T-cell (primary cell): ENCODE measurements at regions of chr5 and their contacts with region 1.

Region 1: DNA sequence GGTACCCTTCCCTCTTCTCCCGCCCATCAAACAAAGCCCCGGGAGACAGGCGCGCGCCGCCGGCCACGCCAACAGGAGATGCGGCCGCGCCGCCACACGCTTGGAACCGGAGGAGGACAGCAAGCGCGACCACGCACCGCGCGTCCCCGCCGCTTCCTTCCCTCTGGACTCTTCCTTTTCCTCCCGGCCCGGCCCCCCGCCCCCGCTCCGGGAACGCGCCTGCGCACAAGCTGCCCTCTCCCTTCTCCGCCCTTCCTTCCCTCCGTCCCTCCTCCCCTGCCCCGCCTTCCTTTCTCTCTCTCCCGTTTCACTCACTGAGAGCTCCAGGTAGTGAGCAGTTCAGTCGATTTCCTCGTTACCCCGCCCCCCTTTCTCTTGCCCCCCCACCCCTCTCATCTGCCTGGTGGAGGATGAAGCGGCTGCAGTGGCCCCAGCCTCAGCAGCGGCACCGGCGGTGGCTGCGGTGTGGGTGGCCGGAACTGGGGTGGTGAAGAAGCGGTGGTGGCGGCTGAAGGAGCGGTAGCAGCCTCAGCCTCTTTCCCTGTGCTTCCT is at the start of gene RASA1:
- DNase-seq: peak in 23 of 35 experiments; percentile 32 to 82 (median 59)
- ATAC-seq: peak; percentile 61 to 71 (median 68)
- H3K4me3 ChIP-seq: peak within 1 kb of the TSS; percentile 96 to 97
- H3K4me3 Mint-ChIP-seq: peak within 1 kb of the TSS; percentile 98 to 99 (median 99)
- H3K27ac ChIP-seq: peak within 1 kb of the TSS; percentile 74
- H3K27ac Mint-ChIP-seq: peak within 1 kb of the TSS; percentile 96
- H3K4me1 ChIP-seq: peaks cover 8 to 26% of the 10 kb centered on the region in 2 experiments
- H3K4me1 Mint-ChIP-seq: peaks cover 24 to 43% (median 34%) of the 10 kb centered on the region in 3 donors
- H3K27me3 ChIP-seq: no peaks in the 10 kb centered on the region
- H3K27me3 Mint-ChIP-seq: peaks cover 0 to 2% of the 10 kb centered on the region in 2 donors
- total RNA-seq, gene RASA1: 23.9 to 32.5 (median 24.7) TPM

Region 2: GRCh38 chr5:87137283-87137682 is 130.4 kb before region 1 on chr5:
- CTCF ChIA-PET with region 1: no interaction called
- POLR2A ChIA-PET with region 1: no interaction called
- DNase-seq: no peak
- ATAC-seq: no peak
- H3K4me3 ChIP-seq: no peak overlapping the region
- H3K4me3 Mint-ChIP-seq: no peak overlapping the region
- H3K27ac ChIP-seq: no peak overlapping the region
- H3K27ac Mint-ChIP-seq: no peak overlapping the region
- H3K4me1 ChIP-seq: no peaks in the 10 kb centered on the region
- H3K4me1 Mint-ChIP-seq: peaks cover 0 to 7% (median 0%) of the 10 kb centered on the region in 3 donors
- H3K27me3 ChIP-seq: no peaks in the 10 kb centered on the region
- H3K27me3 Mint-ChIP-seq: no peaks in the 10 kb centered on the region

Region 3: DNA sequence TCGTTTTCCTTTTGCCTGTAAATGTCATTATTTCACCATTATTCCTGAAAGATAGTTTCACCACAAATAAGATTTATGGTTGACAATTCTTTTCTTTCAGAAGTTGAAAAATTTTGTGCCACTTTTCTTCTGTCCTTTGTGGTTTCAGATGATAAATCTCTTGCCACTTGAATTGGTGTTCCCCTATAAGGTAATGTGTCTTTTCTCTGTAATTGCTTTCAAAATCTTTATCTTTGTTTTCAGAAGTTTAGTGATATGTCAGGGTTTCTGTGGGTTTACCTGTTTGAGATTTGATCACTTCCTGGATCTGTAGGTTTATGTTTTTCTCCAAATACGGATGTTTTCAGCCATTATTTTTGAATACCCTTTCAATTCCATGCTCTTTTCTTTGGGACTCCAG is 14.6 kb after region 1 on chr5:
- CTCF ChIA-PET with region 1: interaction called, 4 to 9 read pairs
- POLR2A ChIA-PET with region 1: interaction called in 1 of 2 experiments, 19 read pairs
- DNase-seq: peak in 1 of 35 experiments; percentile 47
- ATAC-seq: peak; percentile 76 to 93 (median 85)
- H3K4me3 ChIP-seq: no peak overlapping the region
- H3K4me3 Mint-ChIP-seq: peak overlapping the region; percentile 63 to 78 (median 66)
- H3K27ac ChIP-seq: peak overlapping the region; percentile 70
- H3K27ac Mint-ChIP-seq: peak overlapping the region; percentile 93 to 94
- H3K4me1 ChIP-seq: peaks cover 8 to 13% of the 10 kb centered on the region in 2 experiments
- H3K4me1 Mint-ChIP-seq: peaks cover 57 to 79% (median 64%) of the 10 kb centered on the region in 3 donors
- H3K27me3 ChIP-seq: no peaks in the 10 kb centered on the region
- H3K27me3 Mint-ChIP-seq: no peaks in the 10 kb centered on the region

Region 4: DNA sequence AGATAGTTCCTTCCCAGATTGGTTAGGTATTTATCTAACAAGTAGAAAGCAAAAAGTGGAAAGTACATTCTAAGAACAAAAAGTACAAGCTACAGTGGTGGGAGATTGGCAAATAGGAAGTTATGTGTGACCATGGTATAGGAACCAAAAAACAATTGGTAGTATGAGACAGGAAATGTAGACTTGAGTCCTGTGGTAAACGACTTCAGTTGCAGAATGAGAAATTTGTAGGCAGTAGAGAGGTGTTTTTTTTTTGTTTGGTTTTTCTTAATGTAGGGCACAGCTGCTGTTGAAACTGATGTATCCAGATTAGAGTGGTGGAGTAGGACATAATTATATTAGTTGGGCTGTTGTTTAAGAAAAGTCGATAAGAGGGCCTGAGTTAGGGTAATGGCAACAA is 73.1 kb after region 1 on chr5:
- CTCF ChIA-PET with region 1: no interaction called
- POLR2A ChIA-PET with region 1: interaction called in 1 of 2 experiments, 10 read pairs
- DNase-seq: peak in 3 of 35 experiments; percentile 0 to 59 (median 5)
- ATAC-seq: peak; percentile 78 to 99 (median 96)
- H3K4me3 ChIP-seq: peak overlapping the region in 1 of 2 donors; percentile 23
- H3K4me3 Mint-ChIP-seq: peak overlapping the region; percentile 28 to 52 (median 50)
- H3K27ac ChIP-seq: peak overlapping the region; percentile 76
- H3K27ac Mint-ChIP-seq: peak overlapping the region; percentile 87 to 89
- H3K4me1 ChIP-seq: peaks cover 4 to 18% of the 10 kb centered on the region in 2 experiments
- H3K4me1 Mint-ChIP-seq: peaks cover 26 to 29% (median 28%) of the 10 kb centered on the region in 3 donors
- H3K27me3 ChIP-seq: no peaks in the 10 kb centered on the region
- H3K27me3 Mint-ChIP-seq: no peaks in the 10 kb centered on the region